RWPE1 (cell line): ENCODE measurements at regions of chr14 and their contacts with region 1.

Region 1: DNA sequence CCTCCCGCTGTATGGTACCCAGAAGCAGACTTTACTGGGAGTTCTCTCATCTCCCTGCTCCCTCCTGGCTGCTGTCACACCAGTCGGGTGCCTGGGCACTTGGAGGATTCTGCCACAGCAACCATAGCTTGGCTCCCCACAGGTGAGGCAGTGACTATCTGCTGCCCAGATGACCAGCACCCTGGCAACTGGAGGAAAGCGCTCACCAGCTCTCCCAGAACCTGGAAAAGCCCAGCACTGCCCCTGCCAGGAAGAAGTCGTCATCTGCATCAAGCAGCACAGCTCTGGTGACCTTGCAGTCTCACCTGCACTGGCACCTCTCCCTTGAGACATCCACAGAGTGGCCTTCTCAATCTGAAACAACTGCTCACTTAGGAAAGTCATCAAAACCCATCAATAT is 31.9 kb upstream of the TC2N start:
- DNase-seq: peak; percentile 23
- H3K27ac ChIP-seq: no peak overlapping the region
- CTCF ChIP-seq: no peak

Region 2: GRCh38 chr14:91911474-91912032 is 12.3 kb after region 1 on chr14:
- CTCF ChIA-PET with region 1: interaction called, 10 read pairs
- POLR2A ChIA-PET with region 1: no interaction called
- DNase-seq: peak; percentile 54
- H3K27ac ChIP-seq: no peak overlapping the region
- CTCF ChIP-seq: peak; percentile 34; the same call in 1 of the 2 replicates